BJ (cell line): ENCODE measurements at regions of chr16 and their contacts with region 1.

Region 1: DNA sequence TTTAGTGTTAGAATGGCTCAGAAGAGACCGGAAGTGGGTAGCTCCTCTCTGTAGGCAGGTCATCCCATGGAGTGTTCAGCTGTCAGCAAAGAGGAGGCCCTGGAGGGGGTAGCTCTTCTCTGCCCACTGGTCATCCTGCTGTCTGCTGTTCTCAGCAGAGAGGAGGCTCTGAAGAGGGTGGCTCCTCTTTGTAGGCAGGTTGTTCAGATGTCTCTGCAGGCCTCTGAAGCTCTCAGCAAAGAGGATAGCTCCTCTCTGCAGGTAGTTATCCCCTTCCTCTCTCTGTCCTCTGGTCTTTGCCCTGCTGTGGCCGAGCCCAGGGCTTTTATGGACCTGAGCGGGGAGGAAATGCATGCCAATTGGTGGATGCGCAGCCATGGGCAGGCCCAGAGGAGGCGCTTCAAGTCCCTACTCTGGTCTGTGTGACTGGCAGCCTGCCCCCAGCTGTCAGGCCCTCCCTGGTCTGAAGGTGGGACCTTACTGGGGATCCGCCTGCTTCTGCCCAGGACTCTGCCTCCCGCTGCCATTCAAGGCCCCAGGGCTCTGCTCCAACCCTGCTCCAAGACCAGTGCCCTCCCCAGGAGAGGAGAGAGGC is 32.5 kb upstream of the FA2H start:
- DNase-seq: no peak
- H3K4me3 ChIP-seq: no peak overlapping the region
- H3K27me3 ChIP-seq: peaks cover 2% of the 10 kb centered on the region; the same call in 1 of the 2 replicates
- CTCF ChIP-seq: no peak

Region 2: GRCh38 chr16:74795104-74795503 is 12.0 kb before region 1 on chr16:
- CTCF ChIA-PET with region 1: interaction called, 10 read pairs
- POLR2A ChIA-PET with region 1: no interaction called
- DNase-seq: no peak
- H3K4me3 ChIP-seq: no peak overlapping the region
- H3K27me3 ChIP-seq: 0 out of 2 replicates have a peak, but pooled peaks cover 1% of the 10 kb centered on the region
- CTCF ChIP-seq: no peak

Region 3: DNA sequence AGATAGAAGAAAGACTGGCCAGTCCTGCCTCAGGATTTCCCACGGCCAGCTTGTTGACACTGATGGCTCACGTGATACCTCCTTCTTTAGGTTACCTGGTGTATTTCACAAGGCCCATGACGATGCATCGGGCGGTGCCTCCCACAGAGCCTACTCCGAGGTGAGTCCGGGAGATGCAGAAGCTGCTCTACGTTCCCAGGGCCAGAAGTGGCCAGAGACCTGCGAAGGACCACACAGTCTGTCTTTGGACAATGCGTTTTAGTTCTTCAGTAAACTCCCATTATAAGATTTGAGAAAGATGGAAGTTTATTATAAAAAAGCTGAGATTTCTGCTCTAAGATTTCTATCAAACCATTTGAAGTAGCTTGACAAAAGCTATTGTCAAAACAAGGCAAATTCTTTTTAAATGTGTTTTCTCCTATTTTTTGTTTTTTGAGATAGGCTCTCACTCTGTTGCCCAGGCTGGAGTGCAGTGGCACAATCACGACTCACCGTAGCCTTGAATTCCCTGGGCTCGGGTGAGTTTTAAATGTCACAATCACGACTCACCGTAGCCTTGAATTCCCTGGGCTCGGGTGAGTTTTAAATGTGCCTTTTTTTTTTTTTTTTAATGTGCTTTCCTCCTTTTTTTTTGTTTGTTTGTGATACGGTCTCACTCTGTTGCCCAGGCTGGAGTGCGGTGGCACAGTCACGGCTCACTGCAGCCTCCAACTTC is 36.7 kb after region 1 on chr16:
- CTCF ChIA-PET with region 1: no interaction called
- POLR2A ChIA-PET with region 1: no interaction called
- DNase-seq: no peak
- H3K4me3 ChIP-seq: no peak overlapping the region
- H3K27me3 ChIP-seq: peaks cover 4% of the 10 kb centered on the region
- CTCF ChIP-seq: no peak